ENCODE measurements at regions of chr15 and their contacts with region 1.

Region 1: DNA sequence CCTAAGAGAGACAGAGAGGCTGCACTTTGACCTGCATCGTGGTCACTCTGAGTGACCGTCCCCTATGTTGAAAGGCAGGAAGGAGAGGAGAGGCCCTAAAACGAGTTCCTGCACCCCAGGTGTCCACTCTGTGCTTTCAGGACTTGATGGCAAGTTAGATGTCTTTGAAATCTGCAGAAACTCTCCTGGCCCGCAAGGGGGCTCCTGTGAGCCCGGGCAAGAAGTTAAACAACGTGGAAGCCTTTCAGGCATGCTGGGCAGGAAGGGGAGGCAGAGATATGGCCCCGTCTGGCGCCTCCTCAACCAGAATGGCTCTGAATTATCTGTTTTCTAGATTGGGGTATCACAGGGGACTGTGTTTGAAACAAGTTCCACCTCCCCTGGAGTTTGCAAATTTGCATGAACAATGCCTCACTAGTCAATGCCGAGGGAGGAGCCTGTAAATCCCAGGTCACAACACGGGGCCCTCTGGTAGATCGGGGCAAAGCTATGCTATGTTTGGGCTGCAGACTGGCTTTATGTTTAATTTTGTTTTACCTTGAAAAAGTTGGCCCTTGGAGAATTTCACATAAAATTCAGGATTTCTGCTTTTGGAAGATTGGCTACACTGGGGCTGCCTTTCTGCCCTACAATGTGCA is 9.8 kb downstream of the CTXND1 start:
- DNase-seq: peak; percentile 54 to 68 (median 62)
- ATAC-seq: peak; percentile 93
- H3K4me3 ChIP-seq: no peak overlapping the region
- H3K27ac ChIP-seq: no peak overlapping the region
- H3K4me1 ChIP-seq: no peaks in the 10 kb centered on the region; a peak in 1 of 5 replicates
- H3K27me3 ChIP-seq: peaks cover 18 to 49% of the 10 kb centered on the region in 2 experiments
- CTCF ChIP-seq: peak; percentile 86 to 88 (median 88)
- EP300 ChIP-seq: no peak
- POLR2A ChIP-seq: no peak
- RAD21 ChIP-seq: peak; percentile 36 to 68; a peak in 3 of 4 replicates

Region 2: DNA sequence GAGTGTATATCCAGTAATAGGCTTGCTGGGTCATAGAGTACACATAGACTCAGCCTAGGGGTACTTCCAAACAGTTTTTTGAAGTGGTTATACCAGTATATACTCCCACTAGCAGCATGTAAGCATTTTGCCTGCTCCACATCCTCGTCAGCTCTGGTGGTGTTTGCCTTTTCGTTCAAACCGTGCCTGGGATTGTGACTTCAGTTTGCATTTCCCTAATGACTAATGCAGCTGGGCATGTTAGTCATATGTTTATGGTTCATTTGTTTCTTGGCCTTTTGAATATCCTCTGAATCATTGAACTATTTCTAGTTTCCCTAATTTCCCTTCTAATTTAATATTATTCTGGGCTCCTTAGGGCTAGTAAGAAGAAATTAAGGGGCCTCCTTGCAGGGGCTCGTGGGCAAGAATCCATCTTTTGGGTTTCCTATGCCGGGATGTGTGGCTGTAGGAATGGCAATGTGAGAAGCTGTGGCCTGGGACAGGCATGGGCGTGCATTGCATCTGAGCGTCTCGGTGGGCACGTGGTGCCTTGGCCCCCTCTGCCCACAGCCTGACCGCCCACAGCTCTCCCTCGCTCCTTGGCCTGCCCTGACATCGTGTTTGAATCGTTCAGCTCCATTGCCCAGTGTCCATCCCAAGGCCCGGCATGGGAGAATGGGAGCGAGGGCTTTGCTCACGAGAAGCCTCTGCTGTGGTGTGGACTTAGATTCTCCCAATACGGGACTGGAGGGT is 63.1 kb before region 1 on chr15:
- CTCF ChIA-PET with region 1: no interaction called
- POLR2A ChIA-PET with region 1: no interaction called
- in situ Hi-C with region 1: no loop called
- intact Hi-C with region 1: no loop called
- DNase-seq: no peak
- ATAC-seq: no peak
- H3K4me3 ChIP-seq: no peak overlapping the region
- H3K27ac ChIP-seq: no peak overlapping the region
- H3K4me1 ChIP-seq: peaks cover 0 to 3% of the 10 kb centered on the region in 2 experiments; a peak in 1 of 5 replicates
- H3K27me3 ChIP-seq: no peaks in the 10 kb centered on the region
- CTCF ChIP-seq: no peak
- EP300 ChIP-seq: no peak
- POLR2A ChIP-seq: no peak
- RAD21 ChIP-seq: no peak

Region 3: GRCh38 chr15:80309769-80310384 is 67.6 kb after region 1 on chr15:
- CTCF ChIA-PET with region 1: no interaction called
- POLR2A ChIA-PET with region 1: no interaction called
- in situ Hi-C with region 1: no loop called
- intact Hi-C with region 1: loop called (anchors 2 kb)
- DNase-seq: peak; percentile 35 to 37 (median 37)
- ATAC-seq: peak; percentile 71; the same call in 1 of the 3 replicates
- H3K4me3 ChIP-seq: no peak overlapping the region
- H3K27ac ChIP-seq: no peak overlapping the region
- H3K4me1 ChIP-seq: 0 out of 5 replicates have a peak, but pooled peaks cover 0 to 4% of the 10 kb centered on the region in 2 experiments
- H3K27me3 ChIP-seq: peaks cover 0 to 12% of the 10 kb centered on the region in 2 experiments
- CTCF ChIP-seq: peak; percentile 51 to 60 (median 51); a peak in 5 of 6 replicates
- EP300 ChIP-seq: no peak
- POLR2A ChIP-seq: no peak
- RAD21 ChIP-seq: peak in 1 of 2 experiments; percentile 64; a peak in 2 of 4 replicates

Region 4: DNA sequence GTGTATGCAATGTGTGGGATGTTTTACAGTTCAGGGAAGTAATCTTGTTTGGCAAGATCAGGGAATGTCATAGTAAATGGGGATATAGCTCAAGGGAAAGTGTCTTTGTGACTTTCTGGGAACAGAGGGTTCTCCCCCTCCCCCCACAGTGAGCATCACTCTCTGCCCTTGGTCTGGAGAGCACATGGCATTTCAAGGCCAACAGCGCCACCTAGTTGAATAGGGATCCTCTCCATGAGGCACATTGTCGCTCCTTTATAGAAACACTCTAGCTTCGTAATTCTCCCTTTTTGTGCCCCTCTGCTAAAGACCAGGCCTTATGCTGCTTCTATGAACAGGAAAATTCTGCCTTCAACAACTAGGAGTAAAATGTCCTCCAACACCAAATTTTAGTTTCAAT is 124.8 kb after region 1 on chr15:
- CTCF ChIA-PET with region 1: interaction called, 3 read pairs
- POLR2A ChIA-PET with region 1: no interaction called
- in situ Hi-C with region 1: no loop called
- intact Hi-C with region 1: loop called (anchors 1 kb)
- DNase-seq: peak; percentile 30 to 64 (median 41)
- ATAC-seq: peak; percentile 60; the same call in 2 of the 3 replicates
- H3K4me3 ChIP-seq: no peak overlapping the region
- H3K27ac ChIP-seq: no peak overlapping the region
- H3K4me1 ChIP-seq: no peaks in the 10 kb centered on the region
- H3K27me3 ChIP-seq: no peaks in the 10 kb centered on the region
- CTCF ChIP-seq: peak; percentile 56 to 59 (median 57)
- EP300 ChIP-seq: no peak
- POLR2A ChIP-seq: no peak
- RAD21 ChIP-seq: peak in 1 of 2 experiments; percentile 61; a peak in 2 of 4 replicates

Measured in K562 (cell line).